ENCODE measurements at regions of chr15 and their contacts with region 1.

Region 1: GRCh38 chr15:101206176-101206591 is 45.7 kb downstream of the CHSY1 start:
- DNase-seq: peak; percentile 24
- H3K4me3 ChIP-seq: no peak overlapping the region
- CTCF ChIP-seq: no peak

Region 2: GRCh38 chr15:101099183-101099582 is 107.0 kb before region 1 on chr15:
- in situ Hi-C with region 1: no loop called
- DNase-seq: no peak
- H3K4me3 ChIP-seq: no peak overlapping the region
- CTCF ChIP-seq: no peak

Region 3: DNA sequence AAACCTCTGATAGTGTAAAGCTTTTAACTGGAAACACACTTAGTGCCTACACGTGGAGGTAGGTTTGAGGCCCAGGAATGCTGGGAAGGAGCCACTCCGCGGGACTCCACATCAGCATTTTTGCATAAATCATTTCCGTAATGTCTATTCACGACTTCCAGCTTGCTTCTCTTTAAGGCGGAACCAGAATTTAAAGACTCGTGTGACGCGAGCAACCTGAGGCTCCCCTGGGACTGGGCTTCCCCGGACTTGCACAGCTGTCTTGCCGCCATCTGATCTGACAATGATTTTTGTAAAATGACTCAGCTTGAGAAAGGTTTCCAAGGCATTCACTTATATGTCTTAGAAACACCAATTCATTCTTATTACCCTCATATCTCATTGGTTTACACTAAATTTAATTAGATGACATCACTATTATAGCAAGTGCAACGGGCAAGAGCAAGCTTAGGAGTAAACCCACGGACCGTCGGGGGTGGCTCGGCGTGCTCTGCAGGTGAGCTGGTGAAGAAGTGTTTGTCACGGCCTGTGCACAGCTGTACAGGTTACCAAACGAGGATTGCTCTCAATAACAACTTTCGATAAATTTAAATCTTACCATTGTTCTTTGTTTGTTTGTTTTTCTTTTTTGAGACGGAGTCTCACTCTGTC is 49.5 kb before region 1 on chr15:
- in situ Hi-C with region 1: loop called (anchors 5 kb)
- DNase-seq: no peak
- H3K4me3 ChIP-seq: no peak overlapping the region
- CTCF ChIP-seq: no peak

Measured in astrocyte of the cerebellum (primary cell).